ENCODE measurements at regions of chr3 and their contacts with region 1.

Region 1: GRCh38 chr3:156674046-156674910 is at the start of gene TIPARP:
- DNase-seq: peak; percentile 97 to 100 (median 99)
- H3K4me3 ChIP-seq: peak within 1 kb of the TSS; percentile 76 to 91
- H3K4me3 Mint-ChIP-seq: peak within 1 kb of the TSS; percentile 93 to 99 (median 96)
- H3K27ac ChIP-seq: peak within 1 kb of the TSS; percentile 94
- H3K27ac Mint-ChIP-seq: peak within 1 kb of the TSS; percentile 95 to 100 (median 99)
- H3K4me1 ChIP-seq: peaks cover 43% of the 10 kb centered on the region
- H3K4me1 Mint-ChIP-seq: peaks cover 32 to 46% (median 37%) of the 10 kb centered on the region in 4 donors
- H3K27me3 ChIP-seq: no peaks in the 10 kb centered on the region
- H3K27me3 Mint-ChIP-seq: no peaks in the 10 kb centered on the region
- total RNA-seq, gene TIPARP: 108 to 119 TPM

Region 2: DNA sequence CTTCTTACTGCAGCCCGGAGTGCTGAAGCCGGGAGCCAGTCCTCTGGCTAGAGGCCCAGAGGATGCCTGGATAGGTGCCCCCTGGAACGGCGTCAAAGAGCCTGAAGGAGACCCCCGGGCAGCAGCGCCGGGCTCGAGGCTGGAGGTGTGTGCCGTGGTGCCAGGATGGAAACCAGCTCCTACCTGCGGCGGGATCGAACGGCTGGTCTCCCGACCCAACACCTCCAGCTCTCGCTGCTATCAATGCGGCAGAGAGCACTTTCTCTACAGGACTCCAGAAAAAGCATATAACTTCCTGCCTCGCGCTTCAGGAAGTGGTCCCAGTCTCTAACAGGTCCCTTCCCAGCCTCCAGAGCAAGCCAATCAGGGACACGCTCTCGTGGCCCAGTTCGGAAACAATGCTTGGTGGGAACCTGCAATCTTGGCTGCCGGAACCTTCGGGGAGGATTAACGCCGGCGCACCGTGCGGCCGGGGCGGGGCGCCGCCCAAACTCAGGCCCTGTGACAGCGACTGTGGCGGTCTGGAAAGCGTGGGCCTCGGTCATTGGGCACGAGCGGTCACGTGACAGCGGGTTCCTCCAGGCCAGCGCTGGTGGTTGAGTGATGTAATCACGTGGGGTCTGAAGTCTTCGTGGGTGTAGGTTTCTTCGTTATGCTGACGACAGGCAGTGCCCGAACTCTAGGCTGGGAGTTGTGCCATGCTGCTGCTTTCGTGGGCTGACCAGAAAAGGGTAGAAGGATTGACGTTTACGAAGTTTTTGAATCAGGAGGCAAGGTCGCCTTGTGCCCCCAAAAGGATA is 819.9 kb before region 1 on chr3 and contains the start of gene SLC33A1:
- CTCF ChIA-PET with region 1: no interaction called
- POLR2A ChIA-PET with region 1: no interaction called
- intact Hi-C with region 1: loop called (anchors 10 kb)
- DNase-seq: peak; percentile 99
- H3K4me3 ChIP-seq: peak within 1 kb of the TSS; percentile 98
- H3K4me3 Mint-ChIP-seq: peak within 1 kb of the TSS; percentile 89 to 98 (median 96)
- H3K27ac ChIP-seq: peak within 1 kb of the TSS; percentile 77
- H3K27ac Mint-ChIP-seq: peak within 1 kb of the TSS; percentile 94 to 100 (median 99)
- H3K4me1 ChIP-seq: peaks cover 44% of the 10 kb centered on the region
- H3K4me1 Mint-ChIP-seq: peaks cover 27 to 58% (median 38%) of the 10 kb centered on the region in 4 donors
- H3K27me3 ChIP-seq: no peaks in the 10 kb centered on the region
- H3K27me3 Mint-ChIP-seq: no peaks in the 10 kb centered on the region
- total RNA-seq, gene SLC33A1: 44.9 to 45.8 TPM

Region 3: DNA sequence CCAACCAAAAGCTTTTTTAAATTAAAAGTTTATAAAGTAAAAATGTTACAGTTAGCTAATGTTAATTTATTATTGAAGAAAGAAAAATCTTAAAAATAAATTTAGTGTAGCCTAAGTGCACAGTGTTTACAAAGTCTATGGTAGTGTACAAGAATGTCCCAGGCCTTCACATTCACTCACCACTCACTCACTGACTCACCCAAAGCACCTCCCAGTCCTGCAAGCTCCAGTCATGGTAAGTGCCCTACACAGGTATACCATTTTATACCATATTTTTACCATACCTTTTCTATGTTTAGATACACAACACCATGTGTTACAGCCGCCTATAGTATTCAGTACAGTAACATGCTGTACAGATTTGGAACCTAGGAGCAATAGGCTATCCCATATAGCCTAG is 148.5 kb before region 1 on chr3:
- CTCF ChIA-PET with region 1: no interaction called
- POLR2A ChIA-PET with region 1: interaction called, 22 read pairs
- intact Hi-C with region 1: no loop called
- DNase-seq: no peak
- H3K4me3 ChIP-seq: no peak overlapping the region
- H3K4me3 Mint-ChIP-seq: peak overlapping the region in 1 of 8 donors; percentile 24
- H3K27ac ChIP-seq: no peak overlapping the region
- H3K27ac Mint-ChIP-seq: no peak overlapping the region
- H3K4me1 ChIP-seq: peaks cover 6% of the 10 kb centered on the region
- H3K4me1 Mint-ChIP-seq: peaks cover 12 to 17% (median 14%) of the 10 kb centered on the region in 4 donors
- H3K27me3 ChIP-seq: no peaks in the 10 kb centered on the region
- H3K27me3 Mint-ChIP-seq: peaks cover 7 to 8% of the 10 kb centered on the region in 2 donors

Region 4: DNA sequence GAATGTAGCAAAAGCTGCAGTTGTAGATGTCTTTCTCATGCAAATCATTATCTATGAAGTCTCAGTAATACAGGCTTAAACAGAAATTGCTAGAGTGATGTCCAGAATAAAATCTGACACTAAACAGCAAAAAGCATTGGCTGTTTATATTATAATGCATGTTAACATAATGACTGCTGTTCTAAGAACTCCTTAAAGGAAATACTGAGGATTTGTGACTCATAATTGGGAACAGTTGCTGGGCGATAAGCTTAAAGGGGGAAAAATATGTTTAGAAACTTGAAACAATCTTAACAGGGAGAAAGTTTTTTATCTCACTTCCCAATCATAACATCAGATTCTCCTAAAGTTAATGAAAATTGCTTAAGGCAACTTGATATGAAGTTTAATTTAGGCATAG is 17.6 kb after region 1 on chr3:
- CTCF ChIA-PET with region 1: interaction called, 10 read pairs
- POLR2A ChIA-PET with region 1: interaction called, 127 read pairs
- intact Hi-C with region 1: loop called (anchors 2 kb)
- DNase-seq: no peak
- H3K4me3 ChIP-seq: no peak overlapping the region
- H3K4me3 Mint-ChIP-seq: no peak overlapping the region
- H3K27ac ChIP-seq: no peak overlapping the region
- H3K27ac Mint-ChIP-seq: no peak overlapping the region
- H3K4me1 ChIP-seq: peaks cover 47% of the 10 kb centered on the region
- H3K4me1 Mint-ChIP-seq: peaks cover 45 to 57% (median 49%) of the 10 kb centered on the region in 4 donors
- H3K27me3 ChIP-seq: no peaks in the 10 kb centered on the region
- H3K27me3 Mint-ChIP-seq: no peaks in the 10 kb centered on the region

Region 5: GRCh38 chr3:156727519-156728205 is 53.4 kb after region 1 on chr3:
- CTCF ChIA-PET with region 1: no interaction called
- POLR2A ChIA-PET with region 1: no interaction called
- intact Hi-C with region 1: no loop called
- DNase-seq: no peak
- H3K4me3 ChIP-seq: no peak overlapping the region
- H3K4me3 Mint-ChIP-seq: no peak overlapping the region
- H3K27ac ChIP-seq: no peak overlapping the region
- H3K27ac Mint-ChIP-seq: no peak overlapping the region
- H3K4me1 ChIP-seq: no peaks in the 10 kb centered on the region
- H3K4me1 Mint-ChIP-seq: peaks cover 0 to 1% (median 0%) of the 10 kb centered on the region in 4 donors
- H3K27me3 ChIP-seq: no peaks in the 10 kb centered on the region
- H3K27me3 Mint-ChIP-seq: no peaks in the 10 kb centered on the region

Region 6: DNA sequence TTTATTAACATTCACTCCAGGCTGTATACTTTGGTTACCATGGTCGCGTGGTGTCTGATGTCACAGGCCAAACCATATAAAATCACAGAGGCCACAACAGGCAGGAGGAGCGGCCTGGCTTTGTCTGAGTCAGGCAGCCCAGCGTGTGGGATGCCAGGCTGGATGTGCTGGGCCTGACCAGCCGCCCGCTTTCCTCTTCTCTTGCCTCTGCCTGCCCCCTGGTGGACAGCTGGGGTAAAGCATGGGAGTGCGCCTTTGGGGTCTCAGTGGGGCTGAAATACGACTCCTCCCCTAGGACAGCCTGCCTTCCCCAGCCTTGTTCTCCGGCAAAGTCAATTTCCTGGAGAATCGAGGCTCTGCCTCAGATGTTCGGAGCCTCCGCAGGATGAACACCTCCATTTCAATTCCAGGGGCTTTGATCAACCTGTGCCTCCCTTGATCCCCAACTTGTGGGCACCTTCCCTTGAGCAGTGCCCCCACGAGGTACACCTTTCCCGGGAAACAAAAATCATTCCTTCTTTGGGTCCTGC is 407.5 kb after region 1 on chr3:
- CTCF ChIA-PET with region 1: interaction called, 49 read pairs
- POLR2A ChIA-PET with region 1: interaction called, 94 read pairs
- intact Hi-C with region 1: loop called (anchors 1 kb)
- DNase-seq: peak; percentile 82 to 92 (median 83)
- H3K4me3 ChIP-seq: no peak overlapping the region
- H3K4me3 Mint-ChIP-seq: peak overlapping the region in 5 of 8 donors; percentile 11 to 39 (median 21)
- H3K27ac ChIP-seq: peak overlapping the region; percentile 55
- H3K27ac Mint-ChIP-seq: peak overlapping the region; percentile 85 to 96 (median 89)
- H3K4me1 ChIP-seq: peaks cover 20% of the 10 kb centered on the region
- H3K4me1 Mint-ChIP-seq: peaks cover 10 to 29% (median 17%) of the 10 kb centered on the region in 4 donors
- H3K27me3 ChIP-seq: no peaks in the 10 kb centered on the region
- H3K27me3 Mint-ChIP-seq: no peaks in the 10 kb centered on the region

Region 7: DNA sequence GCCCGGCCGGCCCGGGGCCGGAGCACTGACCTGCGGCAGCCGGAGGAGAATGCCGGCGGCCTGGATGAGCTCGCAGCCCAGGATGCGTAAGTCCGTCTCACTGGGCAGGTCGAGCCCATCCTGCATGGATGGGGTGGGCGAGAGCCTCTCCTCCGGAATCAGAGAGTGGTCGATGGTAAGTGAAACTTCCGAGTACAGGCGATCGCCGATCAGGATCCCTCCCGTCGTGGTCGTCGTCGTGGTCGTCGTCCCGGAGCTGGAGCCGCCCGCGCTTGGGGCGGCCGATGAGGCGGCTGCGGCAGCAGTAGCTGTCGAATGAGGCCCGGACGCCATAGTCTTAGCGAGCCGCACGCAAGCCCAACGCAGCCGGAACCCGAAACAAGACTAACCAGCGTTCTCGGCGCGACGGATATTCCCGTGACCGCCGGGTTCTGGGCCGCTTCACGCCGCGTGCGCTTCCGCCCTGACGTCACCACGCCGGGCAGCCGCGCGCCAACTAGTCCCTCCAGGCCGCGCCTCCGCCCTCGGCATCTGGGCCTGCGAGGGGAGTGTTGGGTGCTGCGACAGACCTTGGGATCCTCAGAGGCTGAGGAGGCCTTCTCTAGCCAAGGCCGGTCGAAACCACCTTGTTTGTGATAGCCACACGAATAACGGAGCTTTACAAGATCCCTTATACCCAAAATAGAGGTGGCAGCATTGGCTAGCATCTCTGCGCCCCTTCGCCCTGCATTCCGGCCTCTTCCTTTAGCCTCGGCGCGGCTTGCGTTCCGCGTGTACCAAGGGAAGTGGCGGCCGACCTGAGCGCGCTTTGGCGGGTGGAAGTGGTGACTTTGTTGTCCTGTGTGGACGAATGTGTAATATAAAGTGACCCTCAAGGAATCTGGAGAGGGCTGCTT is 485.7 kb after region 1 on chr3 and contains the start of gene CCNL1:
- CTCF ChIA-PET with region 1: interaction called, 4 read pairs
- POLR2A ChIA-PET with region 1: interaction called, 78 read pairs
- intact Hi-C with region 1: loop called (anchors 1 kb)
- DNase-seq: peak; percentile 93 to 97 (median 96)
- H3K4me3 ChIP-seq: peak within 1 kb of the TSS; percentile 87 to 97
- H3K4me3 Mint-ChIP-seq: peak within 1 kb of the TSS; percentile 92 to 99 (median 96)
- H3K27ac ChIP-seq: peak within 1 kb of the TSS; percentile 100
- H3K27ac Mint-ChIP-seq: peak within 1 kb of the TSS; percentile 99 to 100 (median 100)
- H3K4me1 ChIP-seq: peaks cover 57% of the 10 kb centered on the region
- H3K4me1 Mint-ChIP-seq: peaks cover 37 to 64% (median 51%) of the 10 kb centered on the region in 4 donors
- H3K27me3 ChIP-seq: no peaks in the 10 kb centered on the region
- H3K27me3 Mint-ChIP-seq: no peaks in the 10 kb centered on the region
- total RNA-seq, gene CCNL1: 327 to 330 TPM

Measured in CD4-positive, alpha-beta memory T cell (primary cell).